PC-9 (cell line): ENCODE measurements at regions of chr10 and their contacts with region 1.

Region 1: DNA sequence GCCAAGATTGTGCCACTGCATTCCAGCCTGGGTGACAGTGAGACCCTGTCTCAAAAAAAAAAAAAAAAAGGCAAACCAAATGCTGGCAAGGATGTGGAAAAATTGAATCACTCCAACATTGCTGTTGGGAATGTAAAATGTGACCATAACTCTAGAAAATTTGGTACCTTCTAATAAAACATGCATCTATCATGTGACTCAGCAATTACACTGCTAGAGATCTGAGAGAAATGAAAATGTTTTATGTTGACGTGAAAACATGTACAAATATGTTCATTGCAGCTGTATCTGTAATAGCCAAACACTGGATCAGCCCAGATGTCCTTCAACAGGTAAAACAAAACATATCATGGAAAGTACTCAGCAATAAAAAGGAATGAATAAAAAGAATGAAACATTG is 30.8 kb upstream of the SAR1A start:
- DNase-seq: no peak
- H3K4me3 ChIP-seq: no peak overlapping the region
- H3K27ac ChIP-seq: no peak overlapping the region
- H3K4me1 ChIP-seq: no peaks in the 10 kb centered on the region
- H3K27me3 ChIP-seq: no peaks in the 10 kb centered on the region
- CTCF ChIP-seq: no peak

Region 2: GRCh38 chr10:70115948-70116682 is 85.0 kb before region 1 on chr10:
- CTCF ChIA-PET with region 1: no interaction called
- POLR2A ChIA-PET with region 1: no interaction called
- intact Hi-C with region 1: loop called (anchors 1 kb)
- DNase-seq: peak in 1 of 2 experiments; percentile 54
- H3K4me3 ChIP-seq: no peak overlapping the region
- H3K27ac ChIP-seq: no peak overlapping the region
- H3K4me1 ChIP-seq: no peaks in the 10 kb centered on the region
- H3K27me3 ChIP-seq: no peaks in the 10 kb centered on the region
- CTCF ChIP-seq: peak; percentile 98

Region 3: DNA sequence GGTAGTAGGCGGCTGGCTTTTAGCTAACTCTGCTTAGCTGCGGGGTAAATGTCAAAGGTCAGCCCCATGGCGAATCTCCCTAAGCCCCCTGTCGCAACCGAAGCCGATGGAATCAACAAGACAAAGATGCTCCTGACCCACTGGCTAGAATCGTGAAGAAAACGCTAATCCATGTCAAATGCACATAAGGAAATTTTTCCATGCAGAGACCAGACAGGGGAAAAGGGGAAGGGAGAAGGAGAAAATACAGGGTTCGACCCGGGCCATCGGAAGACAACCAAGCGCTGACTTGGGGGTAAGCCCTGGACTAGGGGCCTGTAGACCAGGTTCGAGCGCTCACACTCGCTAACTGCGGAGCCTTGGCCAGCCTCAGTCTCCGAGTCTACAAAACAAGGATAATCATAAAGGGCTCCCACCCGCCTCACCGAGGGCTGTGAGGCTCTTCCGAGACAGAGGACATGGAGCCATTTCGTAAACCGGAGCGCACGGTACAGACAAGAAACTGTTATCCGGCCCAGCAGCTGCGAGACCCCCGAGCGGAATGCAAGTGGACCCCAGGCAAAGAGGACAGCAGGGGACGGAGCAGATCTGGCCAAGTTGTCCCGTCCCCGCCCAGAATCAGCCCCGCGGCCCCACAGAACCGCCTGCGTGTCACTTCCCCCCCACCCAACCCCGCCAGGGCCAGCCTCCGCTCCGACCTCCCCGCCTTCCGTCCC is 31.3 kb before region 1 on chr10:
- CTCF ChIA-PET with region 1: no interaction called
- POLR2A ChIA-PET with region 1: no interaction called
- intact Hi-C with region 1: loop called (anchors 5 kb)
- DNase-seq: no peak
- H3K4me3 ChIP-seq: peak overlapping the region; percentile 98
- H3K27ac ChIP-seq: 0 out of 2 replicates have a peak overlapping the region, but pooled peaks have one; percentile 68
- H3K4me1 ChIP-seq: peaks cover 36% of the 10 kb centered on the region
- H3K27me3 ChIP-seq: no peaks in the 10 kb centered on the region
- CTCF ChIP-seq: no peak